ENCODE measurements at regions of chr6 and their contacts with region 1.

Region 1: GRCh38 chr6:40308533-40309306 is 278.4 kb downstream of the LRFN2 start:
- DNase-seq: peak; percentile 79
- ATAC-seq: no peak
- H3K4me3 Mint-ChIP-seq: no peak overlapping the region
- H3K27ac Mint-ChIP-seq: no peak overlapping the region
- H3K4me1 Mint-ChIP-seq: peaks cover 3% of the 10 kb centered on the region
- H3K27me3 Mint-ChIP-seq: peaks cover 36% of the 10 kb centered on the region

Region 2: DNA sequence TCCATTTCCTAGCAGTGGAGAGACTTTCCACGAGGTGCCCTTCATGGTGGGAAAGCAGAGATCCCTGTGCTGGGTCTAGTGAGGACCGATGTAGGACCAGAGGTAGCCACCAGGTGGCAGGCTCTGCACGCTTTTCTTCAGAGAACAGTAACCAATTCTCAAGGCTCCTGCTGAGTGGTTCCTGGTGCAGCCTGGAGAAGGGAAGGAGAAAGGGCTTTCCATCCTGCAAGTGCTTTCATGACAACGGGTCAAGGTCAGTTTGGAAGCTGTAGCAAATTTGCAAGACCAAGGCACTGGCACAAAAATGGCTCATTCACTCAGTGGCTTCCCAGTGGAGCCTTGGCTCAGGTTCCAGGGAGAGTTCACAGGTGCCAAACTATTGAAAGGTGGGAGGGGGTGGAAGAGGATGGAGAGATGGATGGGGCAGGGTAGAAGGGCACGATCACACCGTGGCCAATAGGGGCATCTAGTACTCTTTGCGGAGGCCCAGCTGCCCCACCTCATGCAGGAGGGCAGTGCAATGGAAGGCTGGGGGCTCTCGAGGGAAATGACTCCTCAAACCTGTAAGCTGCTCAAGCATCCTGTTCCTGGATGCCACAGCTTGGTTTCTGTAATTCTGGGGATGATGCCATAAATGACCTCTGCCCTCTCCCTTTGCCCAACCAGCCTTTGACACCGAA is 960.7 kb before region 1 on chr6:
- CTCF ChIA-PET with region 1: no interaction called
- POLR2A ChIA-PET with region 1: no interaction called
- intact Hi-C with region 1: loop called in 1 of 2 experiments (anchors 2 kb)
- DNase-seq: peak; percentile 76
- ATAC-seq: peak; percentile 80
- H3K4me3 Mint-ChIP-seq: no peak overlapping the region
- H3K27ac Mint-ChIP-seq: no peak overlapping the region
- H3K4me1 Mint-ChIP-seq: no peaks in the 10 kb centered on the region
- H3K27me3 Mint-ChIP-seq: peaks cover 3% of the 10 kb centered on the region

Region 3: DNA sequence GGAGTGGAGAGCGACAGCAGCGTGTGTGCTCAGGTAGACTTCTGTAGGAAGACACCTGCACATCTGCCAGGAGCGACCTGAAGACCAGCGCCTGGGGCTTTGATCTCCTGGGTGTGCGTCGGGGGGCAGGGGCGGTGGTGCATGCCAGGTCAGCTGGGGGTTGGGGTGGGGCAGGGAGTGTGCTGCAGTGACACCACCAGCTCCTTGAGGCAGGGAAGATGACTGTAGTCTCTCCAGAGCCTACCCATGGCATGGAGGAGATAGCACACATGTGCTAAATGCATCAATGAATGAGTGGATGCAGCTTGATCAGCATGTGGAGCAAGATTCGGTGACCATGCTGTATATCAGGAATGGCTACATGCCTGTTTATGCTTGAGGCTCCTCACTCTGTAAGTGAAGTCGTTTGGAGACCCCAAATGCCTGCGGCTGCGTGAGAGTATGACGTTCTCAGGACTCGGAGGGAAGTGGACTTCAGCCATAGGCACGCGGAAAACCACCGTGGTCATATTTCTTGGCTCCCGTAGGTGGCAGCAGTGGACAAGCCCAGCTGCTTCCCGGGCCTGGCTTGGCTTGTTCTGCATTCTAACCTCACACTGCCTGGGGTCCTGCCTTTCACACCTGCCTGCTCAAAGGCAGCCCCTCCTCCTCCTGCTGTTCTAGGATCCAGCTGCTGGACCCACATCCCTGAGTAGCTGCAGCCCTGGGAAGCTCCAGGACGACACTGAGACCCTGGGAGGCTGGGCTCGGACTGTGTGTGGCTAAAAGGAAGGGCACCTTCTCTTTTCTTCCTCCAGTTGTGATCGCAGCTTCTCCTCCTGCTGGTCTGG is 946.8 kb before region 1 on chr6:
- CTCF ChIA-PET with region 1: no interaction called
- POLR2A ChIA-PET with region 1: no interaction called
- intact Hi-C with region 1: loop called (anchors 2 to 5 kb)
- DNase-seq: peak; percentile 74
- ATAC-seq: peak; percentile 74
- H3K4me3 Mint-ChIP-seq: no peak overlapping the region
- H3K27ac Mint-ChIP-seq: no peak overlapping the region
- H3K4me1 Mint-ChIP-seq: no peaks in the 10 kb centered on the region
- H3K27me3 Mint-ChIP-seq: no peaks in the 10 kb centered on the region

Region 4: DNA sequence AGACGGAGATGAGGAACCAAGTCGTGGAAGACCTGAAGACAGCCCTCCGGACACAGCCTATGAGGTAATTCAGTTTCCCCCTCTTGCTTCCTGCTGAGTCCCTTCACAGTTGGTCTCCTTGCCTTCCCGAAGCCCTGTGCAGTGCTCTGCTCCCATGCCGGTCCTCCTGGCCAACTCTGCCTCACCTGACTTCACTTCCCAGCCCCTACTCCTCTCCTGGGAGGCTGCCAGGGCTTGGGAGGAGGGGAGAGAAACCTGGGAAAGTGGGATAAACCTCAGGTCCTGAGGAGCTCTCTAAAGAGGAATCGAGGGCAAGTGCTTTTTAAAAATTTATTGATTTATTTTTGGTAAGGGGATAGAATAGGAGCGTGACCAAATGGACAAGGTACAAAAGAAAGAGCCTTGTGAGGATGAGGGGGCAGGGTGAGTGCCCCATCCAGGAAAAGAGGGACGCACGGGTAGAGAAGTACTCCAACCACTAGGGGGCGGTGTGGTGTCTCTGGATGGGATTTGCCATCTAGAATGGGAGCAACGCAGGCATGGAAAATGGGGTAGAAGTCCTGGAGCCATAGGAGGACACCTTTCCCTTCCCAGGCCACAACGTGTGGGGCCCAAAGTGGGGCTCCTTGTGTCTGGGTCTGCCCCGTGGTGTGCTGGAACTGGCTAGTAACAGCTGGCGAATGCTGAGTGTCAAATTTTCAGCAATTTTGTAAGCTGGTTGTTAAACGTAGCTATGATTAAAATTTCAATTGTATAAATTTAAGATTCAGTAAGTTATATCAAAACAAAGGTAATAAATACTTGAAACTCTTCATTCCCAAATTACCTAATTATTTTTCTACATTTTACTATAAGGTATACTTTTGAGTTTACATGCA is 443.5 kb before region 1 on chr6:
- CTCF ChIA-PET with region 1: interaction called, 6 read pairs
- POLR2A ChIA-PET with region 1: no interaction called
- intact Hi-C with region 1: loop called (anchors 1 to 2 kb)
- DNase-seq: peak; percentile 83
- ATAC-seq: peak; percentile 44
- H3K4me3 Mint-ChIP-seq: no peak overlapping the region
- H3K27ac Mint-ChIP-seq: no peak overlapping the region
- H3K4me1 Mint-ChIP-seq: no peaks in the 10 kb centered on the region
- H3K27me3 Mint-ChIP-seq: peaks cover 4% of the 10 kb centered on the region

Region 5: DNA sequence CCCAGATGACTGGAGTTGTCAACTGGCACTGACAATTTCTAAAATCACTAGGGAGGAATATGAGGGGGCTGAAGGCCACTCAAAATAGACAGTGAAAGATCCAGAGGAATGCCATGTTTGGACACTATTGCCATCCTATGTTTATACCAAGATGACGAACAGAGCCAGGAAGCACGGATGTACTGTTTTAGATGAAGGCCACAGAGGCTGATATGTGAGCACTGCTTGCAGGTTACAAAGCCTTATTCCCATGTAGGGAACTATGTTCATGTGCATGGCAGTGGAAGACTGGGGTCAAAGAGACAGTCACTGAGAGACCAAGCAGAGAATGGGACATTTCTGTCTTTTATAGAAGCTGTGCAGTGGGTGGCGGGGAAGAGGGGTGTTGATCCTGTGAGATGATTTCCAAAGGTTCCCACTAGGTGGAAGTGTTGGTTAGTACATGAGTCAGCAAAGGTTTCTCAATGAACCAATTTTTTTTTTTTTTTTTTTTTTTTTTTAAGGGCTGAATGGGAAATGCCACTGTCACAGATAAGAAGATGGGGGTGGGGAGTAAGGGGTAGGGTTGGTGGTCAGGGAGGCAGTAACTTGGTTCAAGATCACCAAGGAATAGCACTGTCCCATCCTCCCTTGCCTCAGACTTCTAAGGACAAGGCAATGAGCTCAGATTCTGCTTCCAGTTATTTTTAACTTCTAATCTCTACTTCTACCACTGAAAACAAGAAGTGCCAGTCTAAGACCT is 327.7 kb before region 1 on chr6:
- CTCF ChIA-PET with region 1: no interaction called
- POLR2A ChIA-PET with region 1: no interaction called
- intact Hi-C with region 1: loop called (anchors 1 to 5 kb)
- DNase-seq: peak; percentile 16
- ATAC-seq: no peak
- H3K4me3 Mint-ChIP-seq: no peak overlapping the region
- H3K27ac Mint-ChIP-seq: no peak overlapping the region
- H3K4me1 Mint-ChIP-seq: no peaks in the 10 kb centered on the region
- H3K27me3 Mint-ChIP-seq: peaks cover 3% of the 10 kb centered on the region

Region 6: GRCh38 chr6:40340957-40341356 is 32.2 kb after region 1 on chr6:
- CTCF ChIA-PET with region 1: no interaction called
- POLR2A ChIA-PET with region 1: no interaction called
- intact Hi-C with region 1: no loop called
- DNase-seq: no peak
- ATAC-seq: no peak
- H3K4me3 Mint-ChIP-seq: no peak overlapping the region
- H3K27ac Mint-ChIP-seq: no peak overlapping the region
- H3K4me1 Mint-ChIP-seq: no peaks in the 10 kb centered on the region
- H3K27me3 Mint-ChIP-seq: no peaks in the 10 kb centered on the region

Measured in activated CD4-positive, alpha-beta T cell treated with anti-CD3 and anti-CD28 coated beads for 36 hours (primary cell).